BJ (cell line): ENCODE measurements at regions of chr17 and their contacts with region 1.

Region 1: GRCh38 chr17:7745748-7746470 is 28.4 kb downstream of the DNAH2 start:
- DNase-seq: peak; percentile 52
- H3K4me3 ChIP-seq: no peak overlapping the region
- H3K27me3 ChIP-seq: no peaks in the 10 kb centered on the region
- CTCF ChIP-seq: 0 out of 2 replicates have a peak, but pooled peaks have one; percentile 13

Region 2: GRCh38 chr17:7729816-7730215 is 16.1 kb before region 1 on chr17:
- CTCF ChIA-PET with region 1: interaction called, 23 read pairs
- POLR2A ChIA-PET with region 1: no interaction called
- DNase-seq: no peak
- H3K4me3 ChIP-seq: no peak overlapping the region
- H3K27me3 ChIP-seq: peaks cover 7% of the 10 kb centered on the region
- CTCF ChIP-seq: no peak

Region 3: GRCh38 chr17:7782237-7782636 is 36.3 kb after region 1 on chr17:
- CTCF ChIA-PET with region 1: interaction called, 264 read pairs
- POLR2A ChIA-PET with region 1: interaction called, 4 read pairs
- DNase-seq: peak; percentile 10
- H3K4me3 ChIP-seq: no peak overlapping the region
- H3K27me3 ChIP-seq: no peaks in the 10 kb centered on the region; the same call in none of the 2 replicates
- CTCF ChIP-seq: peak; percentile 58

Region 4: DNA sequence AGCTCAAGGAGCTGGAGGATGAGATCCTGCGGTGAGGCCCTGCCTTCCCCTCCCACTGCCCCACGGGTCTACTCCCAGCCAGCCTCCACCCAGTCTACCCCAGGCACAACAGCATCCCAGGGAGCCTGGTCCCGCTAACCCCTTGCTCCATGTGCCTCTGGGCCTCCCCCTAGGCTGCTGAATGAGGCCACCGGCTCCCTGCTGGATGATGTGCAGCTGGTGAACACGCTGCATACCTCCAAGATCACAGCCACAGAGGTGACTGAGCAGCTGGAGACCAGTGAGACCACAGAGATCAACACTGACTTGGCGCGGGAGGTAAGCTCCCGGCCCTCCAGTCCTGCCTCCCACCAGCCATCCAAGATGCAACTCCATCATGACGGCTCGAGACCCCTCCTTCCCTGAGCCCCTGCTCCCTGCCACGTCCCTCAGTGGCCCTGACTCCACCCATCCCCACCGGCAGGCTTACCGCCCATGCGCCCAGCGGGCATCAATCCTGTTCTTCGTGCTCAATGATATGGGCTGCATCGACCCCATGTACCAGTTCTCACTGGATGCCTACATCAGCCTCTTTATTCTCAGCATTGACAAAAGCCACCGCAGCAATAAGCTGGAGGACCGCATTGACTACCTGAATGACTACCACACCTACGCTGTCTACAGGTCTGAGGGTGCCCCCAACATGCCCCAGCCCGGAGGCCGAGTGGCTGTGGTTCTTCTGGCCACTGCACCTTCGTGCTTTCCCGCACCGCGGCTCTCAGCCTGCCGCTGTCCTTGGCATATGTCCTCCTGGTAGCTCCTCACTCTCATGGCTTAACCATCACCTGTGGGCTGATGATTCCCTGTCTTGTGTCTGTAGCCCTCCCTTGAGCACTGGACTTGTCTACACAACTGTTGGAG is 73.1 kb after region 1 on chr17:
- CTCF ChIA-PET with region 1: interaction called, 16 read pairs
- POLR2A ChIA-PET with region 1: no interaction called
- DNase-seq: no peak
- H3K4me3 ChIP-seq: no peak overlapping the region
- H3K27me3 ChIP-seq: peaks cover 7% of the 10 kb centered on the region
- CTCF ChIP-seq: no peak

Region 5: DNA sequence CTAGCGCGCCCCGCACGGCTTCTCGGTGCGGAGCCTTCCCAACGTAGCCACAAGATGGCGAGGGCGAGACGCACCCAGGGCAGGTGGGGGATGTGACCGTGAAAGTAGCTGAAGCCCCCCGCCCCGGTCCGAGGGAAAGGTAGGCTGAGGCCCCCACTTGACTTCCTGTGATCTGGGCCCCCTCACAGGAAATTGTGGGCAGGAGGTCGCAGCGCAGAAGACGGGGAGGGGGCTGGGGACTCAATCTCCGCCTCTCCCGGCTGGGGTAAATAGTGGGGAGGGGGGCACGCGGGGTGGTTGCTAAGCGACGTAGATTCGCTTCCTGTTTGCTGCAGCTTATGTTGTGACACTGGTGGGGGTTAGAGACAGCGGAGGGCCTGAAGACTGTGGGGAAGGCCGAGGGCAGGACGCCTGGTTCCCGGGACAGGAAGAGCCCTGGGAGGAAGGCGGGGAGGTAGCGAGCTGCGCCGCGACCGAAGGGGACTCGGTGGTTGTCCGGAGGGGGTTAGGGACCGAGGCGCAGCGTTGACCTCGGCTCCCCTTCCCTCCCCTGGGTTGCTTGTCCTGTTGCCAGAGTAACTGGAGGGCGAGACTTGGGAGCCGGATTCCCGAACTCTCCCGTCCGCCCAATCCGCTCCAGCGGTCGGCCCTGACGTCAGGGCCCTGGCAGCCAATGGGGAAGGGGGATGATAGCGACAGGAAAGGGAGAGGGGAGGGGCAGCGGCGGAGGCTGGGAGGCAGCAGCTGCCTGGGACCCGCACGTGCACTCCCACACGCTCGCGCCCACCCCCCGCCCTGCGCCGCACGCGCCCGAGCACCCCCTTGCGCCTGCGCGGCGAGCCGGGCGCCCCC is 89.3 kb after region 1 on chr17:
- CTCF ChIA-PET with region 1: interaction called, 11 read pairs
- POLR2A ChIA-PET with region 1: no interaction called
- DNase-seq: peak; percentile 91
- H3K4me3 ChIP-seq: peak overlapping the region; percentile 85
- H3K27me3 ChIP-seq: peaks cover 2% of the 10 kb centered on the region; the same call in 1 of the 2 replicates
- CTCF ChIP-seq: peak; percentile 95